ENCODE measurements at regions of chr2 and their contacts with region 1.

Region 1: GRCh38 chr2:128232965-128233789 is 85.5 kb downstream of the HS6ST1 start:
- DNase-seq: peak; percentile 77
- H3K4me3 Mint-ChIP-seq: peak overlapping the region; percentile 70
- H3K27ac Mint-ChIP-seq: no peak overlapping the region
- H3K4me1 Mint-ChIP-seq: peaks cover 3% of the 10 kb centered on the region
- H3K27me3 Mint-ChIP-seq: peaks cover 11% of the 10 kb centered on the region

Region 2: GRCh38 chr2:128178650-128179460 is 54.3 kb before region 1 on chr2:
- intact Hi-C with region 1: loop called (anchors 1 kb)
- DNase-seq: peak; percentile 28
- H3K4me3 Mint-ChIP-seq: no peak overlapping the region
- H3K27ac Mint-ChIP-seq: no peak overlapping the region
- H3K4me1 Mint-ChIP-seq: peaks cover 15% of the 10 kb centered on the region
- H3K27me3 Mint-ChIP-seq: no peaks in the 10 kb centered on the region

Region 3: DNA sequence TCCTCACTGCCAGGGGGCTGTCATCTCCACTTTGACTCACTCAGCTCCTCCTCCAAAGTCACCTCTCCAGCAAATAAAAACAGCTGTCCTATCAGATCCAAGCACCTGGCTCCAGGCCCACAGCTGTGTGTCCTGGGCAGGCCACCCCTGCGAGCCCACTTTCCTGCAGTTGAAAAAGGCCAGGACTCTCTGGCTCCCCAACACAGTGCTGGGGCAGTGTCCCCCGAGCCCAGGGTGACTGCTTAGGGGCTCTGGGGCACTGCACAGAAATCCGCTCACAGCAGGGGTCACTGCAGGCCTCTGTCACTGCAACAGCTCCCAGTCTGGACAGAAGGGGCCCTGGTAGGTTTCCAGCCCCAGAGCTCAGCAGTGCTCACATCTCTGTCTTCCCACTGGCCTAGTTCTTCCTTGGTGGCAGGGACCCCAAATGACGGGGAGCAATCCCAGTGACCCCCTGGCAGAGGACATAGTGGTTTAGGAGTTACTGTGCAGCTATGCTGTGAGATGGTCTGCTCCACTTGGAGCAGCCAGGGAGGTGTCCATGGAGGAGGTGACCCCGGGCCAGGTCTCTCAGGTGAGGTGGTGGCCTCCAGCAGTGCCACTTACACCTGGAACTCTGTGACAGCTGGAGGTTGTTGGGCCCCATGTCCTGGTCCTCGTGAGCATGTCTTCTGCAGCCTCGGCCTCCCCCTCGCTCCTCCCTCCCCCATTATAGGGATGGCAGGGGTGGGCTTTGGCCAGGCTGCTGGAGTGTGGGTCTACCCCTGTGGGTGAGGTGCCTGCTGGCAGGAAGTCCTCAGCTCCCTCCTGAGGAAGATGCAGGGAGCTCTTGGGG is 50.0 kb after region 1 on chr2:
- intact Hi-C with region 1: no loop called
- DNase-seq: no peak
- H3K4me3 Mint-ChIP-seq: no peak overlapping the region
- H3K27ac Mint-ChIP-seq: no peak overlapping the region
- H3K4me1 Mint-ChIP-seq: no peaks in the 10 kb centered on the region
- H3K27me3 Mint-ChIP-seq: no peaks in the 10 kb centered on the region

Measured in activated T-helper 2 cell treated with anti-CD3 and anti-CD28 coated beads, Interferon-gamma antibody, Interleukin-2, Interleukin-4, amounts not matched to agents 10 μg/mL and 5 μg/mL and 100 μg/mL, durations not matched to agents 14 hours and 24 hours and 36 hours (primary cell).